Heart left ventricle (tissue), 16 donors: ENCODE measurements at regions of chr3 and their contacts with region 1.

Region 1: DNA sequence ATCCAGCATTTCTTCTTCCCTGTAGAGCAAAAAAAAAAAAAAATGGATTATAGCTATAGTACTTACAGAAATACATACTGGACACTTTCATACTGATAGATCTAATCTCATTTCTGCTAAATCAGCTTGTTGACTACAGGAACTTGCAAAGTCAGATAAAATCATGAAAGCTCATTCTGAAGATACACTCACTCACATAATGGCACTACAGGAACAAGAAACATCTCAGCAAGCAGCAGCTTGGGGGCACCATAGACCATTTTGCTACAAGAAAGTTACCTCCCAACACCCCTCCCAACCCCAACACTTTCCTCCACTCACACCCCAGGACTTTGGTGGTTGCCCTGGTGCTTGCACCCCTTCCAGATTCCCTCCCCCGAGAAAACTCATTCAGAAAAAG is 4.6 kb downstream of the MYH15 start:
- DNase-seq: no peak
- ATAC-seq: no peak
- H3K4me3 ChIP-seq: no peak overlapping the region
- H3K27ac ChIP-seq: no peak overlapping the region
- H3K4me1 ChIP-seq: peaks cover 0 to 9% (median 0%) of the 10 kb centered on the region in 12 donors
- H3K27me3 ChIP-seq: no peaks in the 10 kb centered on the region
- CTCF ChIP-seq: peak in 2 of 12 donors; percentile 16 to 19
- POLR2A ChIP-seq: no peak

Region 2: DNA sequence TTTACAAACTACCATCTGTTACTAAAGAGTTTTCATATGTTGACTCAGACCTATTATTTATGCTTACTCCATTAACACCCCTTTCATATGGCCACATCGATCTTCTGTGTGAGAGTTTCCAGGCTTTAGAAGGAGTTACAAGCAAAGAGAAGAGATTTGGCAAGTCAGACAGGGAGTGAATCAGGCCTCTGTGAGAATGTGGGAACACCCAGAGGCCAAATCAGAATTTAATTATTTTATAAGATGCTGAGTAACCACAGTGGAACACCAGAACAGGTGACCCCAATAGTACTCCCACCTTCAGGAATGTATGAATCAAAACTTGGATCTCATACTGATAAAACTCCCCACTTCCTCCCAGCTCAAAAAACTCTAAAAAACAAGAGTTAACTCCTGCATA is 325.6 kb before region 1 on chr3:
- intact Hi-C with region 1: no loop called
- DNase-seq: no peak
- ATAC-seq: peak in 1 of 4 donors; percentile 24
- H3K4me3 ChIP-seq: no peak overlapping the region
- H3K27ac ChIP-seq: no peak overlapping the region
- H3K4me1 ChIP-seq: peaks cover 0 to 20% (median 0%) of the 10 kb centered on the region in 12 donors
- H3K27me3 ChIP-seq: no peaks in the 10 kb centered on the region
- CTCF ChIP-seq: no peak
- POLR2A ChIP-seq: no peak

Region 3: GRCh38 chr3:108552267-108553159 is 46.7 kb after region 1 on chr3:
- intact Hi-C with region 1: loop called in 1 of 10 experiments (anchors 5 kb)
- DNase-seq: no peak
- ATAC-seq: peak; percentile 39 to 68 (median 46)
- H3K4me3 ChIP-seq: peak overlapping the region in 3 of 12 donors; percentile 8 to 22 (median 10)
- H3K27ac ChIP-seq: no peak overlapping the region
- H3K4me1 ChIP-seq: peaks cover 0 to 11% (median 0%) of the 10 kb centered on the region in 12 donors
- H3K27me3 ChIP-seq: no peaks in the 10 kb centered on the region
- CTCF ChIP-seq: peak; percentile 13 to 74 (median 59)
- POLR2A ChIP-seq: no peak